Left cardiac atrium (tissue), 4 donors: ENCODE measurements at regions of chr2 and their contacts with region 1.

Region 1: GRCh38 chr2:95121407-95122196 is at the start of gene MRPS5:
- DNase-seq: peak; percentile 91
- ATAC-seq: peak; percentile 98 to 99
- total RNA-seq, gene MRPS5: 56.0 to 56.5 TPM

Region 2: DNA sequence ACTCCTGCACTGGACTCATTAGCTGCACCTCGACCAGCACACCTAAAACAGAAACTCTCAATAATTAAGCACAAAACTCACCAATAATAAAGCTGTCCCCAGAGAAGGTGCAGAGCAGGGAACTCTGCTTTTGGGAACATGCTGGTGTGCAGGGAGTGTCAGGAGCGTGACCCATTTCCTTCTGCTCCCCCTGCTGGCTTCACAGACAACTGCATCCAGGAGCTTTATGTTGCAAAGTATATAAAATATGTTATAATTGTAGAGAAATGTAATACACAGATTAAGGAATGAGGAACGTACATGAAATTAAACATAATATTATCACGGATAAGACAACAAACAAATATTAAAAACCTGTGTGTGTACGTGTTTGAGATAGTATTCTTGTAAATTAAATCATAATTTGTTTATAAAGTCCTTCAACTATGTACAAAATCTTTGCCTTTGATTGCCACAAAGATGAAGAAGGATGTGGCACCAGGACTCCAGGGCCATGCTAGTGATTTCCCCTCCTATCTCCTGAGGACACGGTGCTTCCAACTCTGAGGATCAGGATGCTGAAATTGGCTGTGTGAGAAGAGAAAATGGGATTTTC is 164.7 kb before region 1 on chr2:
- intact Hi-C with region 1: no loop called
- DNase-seq: peak; percentile 20
- ATAC-seq: no peak

Region 3: GRCh38 chr2:95165129-95166064 is 43.8 kb after region 1 on chr2 and contains the start of gene ZNF2:
- intact Hi-C with region 1: loop called in 1 of 2 experiments (anchors 2 kb)
- DNase-seq: peak; percentile 98
- ATAC-seq: peak; percentile 99
- total RNA-seq, gene ZNF2: 3.0 to 4.2 TPM

Region 4: GRCh38 chr2:95207111-95207961 is 85.7 kb after region 1 on chr2 and contains the start of gene ZNF892:
- intact Hi-C with region 1: loop called in 1 of 2 experiments (anchors 10 kb)
- DNase-seq: peak; percentile 93
- ATAC-seq: peak; percentile 99
- total RNA-seq, gene ZNF892: 2.8 to 2.9 TPM

Region 5: GRCh38 chr2:95231723-95232122 is 110.1 kb after region 1 on chr2:
- intact Hi-C with region 1: no loop called
- DNase-seq: no peak
- ATAC-seq: peak in 1 of 2 donors; percentile 35